Caco-2 (cell line): ENCODE measurements at regions of chr17 and their contacts with region 1.

Region 1: DNA sequence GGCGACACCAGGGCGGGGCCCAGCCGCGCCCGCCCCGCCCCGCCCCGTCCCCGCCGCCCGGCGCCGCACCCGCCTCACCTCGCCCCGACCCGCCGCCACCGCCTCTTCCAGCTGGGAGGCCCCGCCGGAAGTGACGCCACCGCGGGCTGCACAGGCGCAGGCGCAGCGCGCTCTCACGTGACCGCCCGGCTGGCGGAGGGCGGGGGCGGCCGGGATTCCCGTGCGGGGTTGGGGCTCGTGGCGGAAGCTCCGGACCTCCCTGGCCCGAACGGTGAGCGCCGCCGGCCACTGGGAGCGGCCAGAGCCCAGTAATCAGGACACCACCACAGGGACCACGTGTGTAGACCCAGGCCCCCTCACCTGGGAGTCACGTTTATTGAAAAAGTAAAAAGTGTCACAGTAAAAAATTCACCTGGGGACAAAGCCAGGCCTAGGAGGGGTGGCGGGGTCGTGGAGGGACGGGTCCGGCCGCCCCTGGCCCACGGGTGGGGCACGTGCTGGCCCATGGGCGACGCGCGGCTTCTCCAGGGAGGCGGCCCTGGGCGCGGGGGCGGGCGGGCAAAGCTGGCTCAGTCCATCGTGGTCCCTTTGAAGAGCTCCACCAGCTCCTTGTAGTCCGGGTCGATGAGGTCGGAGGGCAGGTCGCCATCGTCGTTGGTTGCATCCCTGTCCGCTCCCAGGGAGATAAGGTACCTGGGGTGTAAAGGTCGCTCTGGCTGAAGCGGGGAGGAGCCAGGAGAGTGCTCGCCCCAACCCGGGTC is at the start of gene MCRIP1:
- DNase-seq: peak; percentile 96 to 99
- H3K4me3 ChIP-seq: peak within 1 kb of the TSS; percentile 85
- H3K4me3 Mint-ChIP-seq: peak within 1 kb of the TSS; percentile 90
- H3K27ac Mint-ChIP-seq: peak within 1 kb of the TSS; percentile 92
- H3K4me1 ChIP-seq: peaks cover 29% of the 10 kb centered on the region
- H3K4me1 Mint-ChIP-seq: peaks cover 20% of the 10 kb centered on the region
- H3K27me3 ChIP-seq: no peaks in the 10 kb centered on the region
- H3K27me3 Mint-ChIP-seq: no peaks in the 10 kb centered on the region
- CTCF ChIP-seq: no peak
- total RNA-seq, gene MCRIP1: 59.7 and 60.0 TPM in 2 replicates

Region 2: DNA sequence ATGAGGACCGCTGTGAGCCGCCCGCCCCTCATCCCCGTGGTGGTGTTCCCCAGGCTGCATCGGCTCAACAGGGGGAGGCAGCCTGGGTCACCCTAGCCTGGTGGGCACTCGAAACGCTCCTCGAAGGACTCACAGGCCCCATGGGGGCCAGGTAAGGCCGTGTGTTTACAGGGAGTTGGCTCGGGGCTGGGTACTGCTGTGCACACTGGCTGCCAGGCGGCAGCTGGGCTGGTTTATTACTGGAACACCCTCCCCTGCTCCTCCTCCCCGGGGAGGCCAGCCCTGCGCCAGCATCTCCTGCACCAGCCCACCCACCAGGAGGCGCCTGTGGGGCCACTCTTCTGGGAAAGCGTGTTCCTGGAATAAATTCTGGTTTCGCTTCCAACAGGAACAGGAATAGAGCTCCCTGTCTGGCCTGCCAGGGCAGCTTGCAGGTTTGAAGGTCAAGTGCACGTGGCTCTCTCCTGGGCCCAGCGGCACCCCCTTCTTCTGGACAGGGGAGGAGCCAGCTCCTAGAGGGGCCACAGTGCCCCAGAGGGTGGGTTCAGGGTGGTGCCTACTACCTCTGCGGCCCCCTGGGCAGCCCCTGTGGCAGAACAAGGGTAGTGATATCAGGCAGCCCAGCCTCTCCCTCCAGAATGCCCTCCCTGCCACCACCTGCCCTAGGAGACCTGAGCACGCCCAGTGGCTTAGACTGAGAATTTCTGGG is 11.6 kb before region 1 on chr17:
- CTCF ChIA-PET with region 1: interaction called, 5 read pairs
- POLR2A ChIA-PET with region 1: interaction called, 12 read pairs
- intact Hi-C with region 1: no loop called
- DNase-seq: peak; percentile 64 to 75
- H3K4me3 ChIP-seq: no peak overlapping the region
- H3K4me3 Mint-ChIP-seq: no peak overlapping the region
- H3K27ac Mint-ChIP-seq: no peak overlapping the region
- H3K4me1 ChIP-seq: no peaks in the 10 kb centered on the region
- H3K4me1 Mint-ChIP-seq: peaks cover 7% of the 10 kb centered on the region
- H3K27me3 ChIP-seq: no peaks in the 10 kb centered on the region
- H3K27me3 Mint-ChIP-seq: no peaks in the 10 kb centered on the region
- CTCF ChIP-seq: peak; percentile 45 to 47

Region 3: GRCh38 chr17:81860756-81861518 is 27.6 kb after region 1 on chr17:
- CTCF ChIA-PET with region 1: no interaction called
- POLR2A ChIA-PET with region 1: interaction called, 8 read pairs
- intact Hi-C with region 1: loop called (anchors 1 kb)
- DNase-seq: peak; percentile 99 to 100
- H3K4me3 ChIP-seq: peak overlapping the region; percentile 61
- H3K4me3 Mint-ChIP-seq: peak overlapping the region; percentile 89
- H3K27ac Mint-ChIP-seq: peak overlapping the region; percentile 94
- H3K4me1 ChIP-seq: peaks cover 17% of the 10 kb centered on the region
- H3K4me1 Mint-ChIP-seq: peaks cover 18% of the 10 kb centered on the region
- H3K27me3 ChIP-seq: no peaks in the 10 kb centered on the region
- H3K27me3 Mint-ChIP-seq: no peaks in the 10 kb centered on the region
- CTCF ChIP-seq: no peak